Activated CD8-positive, alpha-beta T cell treated with anti-CD3 and anti-CD28 coated beads for 36 hours (primary cell): ENCODE measurements at regions of chrX and their contacts with region 1.

Region 1: DNA sequence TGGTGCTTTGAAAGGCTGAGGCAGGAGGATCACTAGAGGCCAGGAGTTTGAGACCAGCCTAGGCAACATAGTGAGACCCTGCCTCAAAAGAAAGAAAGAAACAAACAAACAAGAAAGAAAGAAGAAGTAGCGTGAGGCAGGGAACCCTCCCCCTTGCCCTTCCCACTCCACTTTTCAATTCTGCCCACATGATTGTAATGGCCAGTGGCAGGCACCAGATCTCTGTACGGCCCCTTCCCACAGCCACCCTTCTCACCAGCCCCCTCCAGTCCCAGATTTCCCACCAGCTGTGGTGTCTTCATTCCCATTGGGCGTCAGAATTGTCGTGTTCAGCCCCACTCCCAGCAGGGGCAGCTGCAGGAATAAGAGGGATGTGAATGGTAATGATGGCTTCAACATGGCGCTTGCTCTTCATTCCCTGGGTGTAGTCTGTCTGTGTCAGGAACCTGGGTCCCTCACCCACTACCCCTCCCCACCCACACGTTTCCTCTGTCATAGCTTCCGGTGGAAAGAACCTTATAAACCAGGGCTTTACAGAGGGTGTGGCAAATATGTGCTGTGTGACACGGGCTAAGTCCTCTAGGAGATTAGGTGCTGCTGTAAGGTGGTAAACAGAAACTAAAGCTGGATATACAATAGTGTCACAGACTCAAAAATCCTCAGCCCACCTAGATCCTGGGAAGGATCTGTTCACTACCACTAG is at the start of gene IL2RG:
- DNase-seq: peak; percentile 83
- ATAC-seq: peak; percentile 84
- H3K4me3 Mint-ChIP-seq: peak within 1 kb of the TSS; percentile 88
- H3K27ac Mint-ChIP-seq: peak within 1 kb of the TSS; percentile 99
- H3K4me1 Mint-ChIP-seq: peaks cover 30% of the 10 kb centered on the region
- H3K27me3 Mint-ChIP-seq: no peaks in the 10 kb centered on the region
- CTCF ChIP-seq: no peak
- total RNA-seq, gene IL2RG: 302 to 310 TPM

Region 2: GRCh38 chrX:71068049-71068763 is 43.1 kb before region 1 on chrX and contains the start of gene SNX12:
- CTCF ChIA-PET with region 1: no interaction called
- POLR2A ChIA-PET with region 1: no interaction called
- intact Hi-C with region 1: loop called (anchors 5 kb)
- DNase-seq: peak; percentile 93
- ATAC-seq: peak; percentile 96
- H3K4me3 Mint-ChIP-seq: peak within 1 kb of the TSS; percentile 92
- H3K27ac Mint-ChIP-seq: peak within 1 kb of the TSS; percentile 97
- H3K4me1 Mint-ChIP-seq: peaks cover 19% of the 10 kb centered on the region
- H3K27me3 Mint-ChIP-seq: no peaks in the 10 kb centered on the region
- CTCF ChIP-seq: no peak
- total RNA-seq, gene SNX12: 33.5 to 34.6 TPM